ENCODE measurements at regions of chr4 and their contacts with region 1.

Region 1: GRCh38 chr4:931960-932712 is at the starts of genes GAK and TMEM175:
- DNase-seq: peak; percentile 93 to 97
- ATAC-seq: peak; percentile 99 to 100 (median 99)
- H3K4me3 ChIP-seq: peak within 1 kb of the TSS; percentile 87 to 100 (median 98)
- H3K27ac ChIP-seq: peak within 1 kb of the TSS; percentile 75 to 98 (median 91)
- H3K4me1 ChIP-seq: peaks cover 8 to 70% (median 47%) of the 10 kb centered on the region in 9 donors
- H3K27me3 ChIP-seq: no peaks in the 10 kb centered on the region
- CTCF ChIP-seq: no peak
- total RNA-seq, gene GAK: 21.0 to 38.1 (median 26.9) TPM
- total RNA-seq, gene TMEM175: 15.6 to 27.9 (median 19.0) TPM

Region 2: GRCh38 chr4:683982-684622 is 248.0 kb before region 1 on chr4:
- intact Hi-C with region 1: loop called in 1 of 10 experiments (anchors 10 kb)
- DNase-seq: peak; percentile 74
- ATAC-seq: peak in 7 of 8 donors; percentile 12 to 46 (median 41)
- H3K4me3 ChIP-seq: no peak overlapping the region
- H3K27ac ChIP-seq: peak overlapping the region in 3 of 10 donors; percentile 22 to 62 (median 39)
- H3K4me1 ChIP-seq: peaks cover 30 to 53% (median 46%) of the 10 kb centered on the region in 9 donors
- H3K27me3 ChIP-seq: no peaks in the 10 kb centered on the region
- CTCF ChIP-seq: peak; percentile 45 to 85 (median 73)

Region 3: DNA sequence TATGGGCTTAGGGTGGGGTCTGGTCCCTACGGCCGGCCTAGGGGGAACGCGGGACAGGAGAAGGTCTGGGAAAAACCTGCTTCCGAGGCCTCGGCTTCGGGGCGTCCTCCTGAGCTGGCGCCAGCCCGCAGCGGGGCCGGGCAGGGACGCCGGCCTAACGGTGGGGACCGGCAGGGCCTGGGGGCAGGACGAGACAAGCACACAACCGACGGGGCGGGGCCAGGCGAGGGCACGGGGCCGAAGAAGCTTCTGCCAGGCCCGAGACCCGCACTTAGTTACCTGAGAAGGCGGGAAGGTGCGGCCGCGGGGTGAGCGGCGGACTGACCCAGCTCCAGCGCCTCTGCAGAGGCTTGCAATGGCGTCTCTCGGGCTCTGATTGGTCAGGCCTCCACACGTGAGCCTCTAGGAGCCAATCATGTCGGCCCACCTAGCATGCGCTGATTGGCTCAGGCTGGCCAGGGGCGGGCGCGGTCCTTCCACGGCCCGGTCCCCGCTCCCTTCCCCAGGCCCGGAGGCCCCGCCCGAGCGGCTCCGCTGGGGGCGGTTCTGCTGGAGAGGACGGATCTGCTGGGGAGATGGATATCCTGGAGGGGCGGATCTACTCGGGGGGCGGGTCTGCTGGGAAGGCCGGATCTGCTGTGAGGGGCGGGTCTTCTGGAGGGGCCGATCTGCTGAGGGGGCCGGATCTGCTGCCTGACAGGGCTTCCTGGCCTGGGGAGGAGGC is 150.5 kb before region 1 on chr4:
- intact Hi-C with region 1: loop called in 2 of 10 experiments (anchors 5 to 10 kb)
- DNase-seq: peak; percentile 99
- ATAC-seq: peak; percentile 96 to 99 (median 98)
- H3K4me3 ChIP-seq: peak overlapping the region; percentile 90 to 100 (median 96)
- H3K27ac ChIP-seq: peak overlapping the region; percentile 76 to 98 (median 96)
- H3K4me1 ChIP-seq: peaks cover 14 to 70% (median 52%) of the 10 kb centered on the region in 9 donors
- H3K27me3 ChIP-seq: peaks cover 4 to 25% (median 23%) of the 10 kb centered on the region in 7 donors
- CTCF ChIP-seq: no peak

Region 4: GRCh38 chr4:973431-974397 is 41.6 kb after region 1 on chr4 and contains the start of gene DGKQ:
- intact Hi-C with region 1: loop called in 1 of 10 experiments (anchors 5 kb)
- DNase-seq: peak; percentile 86 to 92
- ATAC-seq: peak; percentile 95 to 99 (median 98)
- H3K4me3 ChIP-seq: peak within 1 kb of the TSS; percentile 61 to 91 (median 80)
- H3K27ac ChIP-seq: peak within 1 kb of the TSS in 4 of 10 donors; percentile 35 to 53 (median 43)
- H3K4me1 ChIP-seq: peaks cover 9 to 31% (median 24%) of the 10 kb centered on the region in 9 donors
- H3K27me3 ChIP-seq: peaks cover 0 to 4% (median 0%) of the 10 kb centered on the region in 7 donors
- CTCF ChIP-seq: no peak
- total RNA-seq, gene DGKQ: 2.8 to 5.2 (median 3.8) TPM

Region 5: GRCh38 chr4:986879-987623 is 54.9 kb after region 1 on chr4 and contains the start of gene IDUA:
- intact Hi-C with region 1: no loop called
- DNase-seq: peak; percentile 78 to 86
- ATAC-seq: peak; percentile 79 to 92 (median 87)
- H3K4me3 ChIP-seq: peak within 1 kb of the TSS; percentile 41 to 92 (median 76)
- H3K27ac ChIP-seq: peak within 1 kb of the TSS in 9 of 10 donors; percentile 6 to 84 (median 58)
- H3K4me1 ChIP-seq: peaks cover 4 to 32% (median 25%) of the 10 kb centered on the region in 9 donors
- H3K27me3 ChIP-seq: no peaks in the 10 kb centered on the region
- CTCF ChIP-seq: peak in 8 of 9 donors; percentile 14 to 65 (median 52)
- total RNA-seq, gene IDUA: 6.0 to 10.4 (median 8.7) TPM

Region 6: GRCh38 chr4:1033840-1034551 is 101.9 kb after region 1 on chr4:
- intact Hi-C with region 1: no loop called
- DNase-seq: peak; percentile 45 to 63
- ATAC-seq: peak in 7 of 8 donors; percentile 4 to 58 (median 32)
- H3K4me3 ChIP-seq: peak overlapping the region in 5 of 10 donors; percentile 15 to 30 (median 22)
- H3K27ac ChIP-seq: peak overlapping the region in 6 of 10 donors; percentile 4 to 60 (median 26)
- H3K4me1 ChIP-seq: peaks cover 0 to 19% (median 4%) of the 10 kb centered on the region in 9 donors
- H3K27me3 ChIP-seq: peaks cover 0 to 47% (median 41%) of the 10 kb centered on the region in 7 donors
- CTCF ChIP-seq: no peak